ENCODE measurements at regions of chr14 and their contacts with region 1.

Region 1: GRCh38 chr14:96741151-96741977 is 55.8 kb upstream of the VRK1 start:
- DNase-seq: peak; percentile 52 to 85 (median 76)
- ATAC-seq: peak; percentile 95
- H3K4me3 ChIP-seq: peak overlapping the region; percentile 56
- H3K4me3 Mint-ChIP-seq: peak overlapping the region; percentile 61 to 86 (median 79)
- H3K27ac ChIP-seq: no peak overlapping the region
- H3K27ac Mint-ChIP-seq: peak overlapping the region in 1 of 9 donors; percentile 43
- H3K4me1 ChIP-seq: no peaks in the 10 kb centered on the region
- H3K4me1 Mint-ChIP-seq: peaks cover 2 to 24% (median 8%) of the 10 kb centered on the region in 7 donors
- H3K27me3 ChIP-seq: peaks cover 3 to 4% of the 10 kb centered on the region in 2 donors
- H3K27me3 Mint-ChIP-seq: peaks cover 54 to 72% (median 64%) of the 10 kb centered on the region in 5 donors

Region 2: DNA sequence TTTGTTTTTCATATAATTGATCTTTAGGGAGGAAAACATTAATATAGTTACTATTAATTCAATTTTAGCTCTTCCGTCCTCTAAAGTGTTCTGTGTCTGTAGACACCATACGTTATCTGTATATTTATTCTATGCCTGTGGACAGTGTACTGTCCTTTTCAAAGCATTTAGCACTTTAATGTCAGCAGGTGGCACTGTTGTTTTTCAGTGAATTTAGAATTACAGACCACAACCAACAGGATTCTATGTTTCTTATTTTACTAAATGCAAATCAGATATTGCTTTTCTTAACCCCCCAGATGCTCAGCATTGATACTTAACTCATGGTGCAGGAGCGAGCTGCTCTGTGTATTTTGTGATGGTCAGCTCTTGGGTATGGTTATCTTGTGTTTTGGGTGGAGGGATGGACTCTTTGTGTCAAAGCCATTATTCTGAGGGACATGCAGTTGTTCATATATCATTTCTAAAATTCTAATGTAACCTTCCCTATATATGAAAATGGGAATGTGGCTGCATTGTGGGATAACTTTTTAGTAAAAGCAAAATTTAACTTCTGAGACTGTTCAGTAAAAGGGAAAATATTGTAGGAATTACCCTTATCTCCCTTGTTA is 174.0 kb before region 1 on chr14:
- CTCF ChIA-PET with region 1: interaction called, 4 read pairs
- POLR2A ChIA-PET with region 1: no interaction called
- intact Hi-C with region 1: loop called (anchors 1 kb)
- DNase-seq: peak in 5 of 9 donors; percentile 16 to 30 (median 25)
- ATAC-seq: peak; percentile 52
- H3K4me3 ChIP-seq: no peak overlapping the region
- H3K4me3 Mint-ChIP-seq: no peak overlapping the region
- H3K27ac ChIP-seq: no peak overlapping the region
- H3K27ac Mint-ChIP-seq: peak overlapping the region in 1 of 9 donors; percentile 29
- H3K4me1 ChIP-seq: no peaks in the 10 kb centered on the region
- H3K4me1 Mint-ChIP-seq: peaks cover 0 to 10% (median 5%) of the 10 kb centered on the region in 7 donors
- H3K27me3 ChIP-seq: no peaks in the 10 kb centered on the region
- H3K27me3 Mint-ChIP-seq: no peaks in the 10 kb centered on the region

Region 3: GRCh38 chr14:96584199-96584906 is 157.0 kb before region 1 on chr14:
- CTCF ChIA-PET with region 1: no interaction called
- POLR2A ChIA-PET with region 1: no interaction called
- intact Hi-C with region 1: loop called in 1 of 2 experiments (anchors 5 kb)
- DNase-seq: peak in 4 of 9 donors; percentile 6 to 24 (median 14)
- ATAC-seq: peak; percentile 54
- H3K4me3 ChIP-seq: no peak overlapping the region
- H3K4me3 Mint-ChIP-seq: no peak overlapping the region
- H3K27ac ChIP-seq: no peak overlapping the region
- H3K27ac Mint-ChIP-seq: no peak overlapping the region
- H3K4me1 ChIP-seq: no peaks in the 10 kb centered on the region
- H3K4me1 Mint-ChIP-seq: peaks cover 0 to 6% (median 0%) of the 10 kb centered on the region in 7 donors
- H3K27me3 ChIP-seq: peaks cover 0 to 6% of the 10 kb centered on the region in 2 donors
- H3K27me3 Mint-ChIP-seq: peaks cover 8 to 33% (median 27%) of the 10 kb centered on the region in 5 donors

Region 4: GRCh38 chr14:97120611-97121031 is 379.3 kb after region 1 on chr14:
- CTCF ChIA-PET with region 1: no interaction called
- POLR2A ChIA-PET with region 1: no interaction called
- intact Hi-C with region 1: loop called in 1 of 2 experiments (anchors 2 kb)
- DNase-seq: peak; percentile 10 to 69 (median 48)
- ATAC-seq: peak; percentile 85
- H3K4me3 ChIP-seq: no peak overlapping the region
- H3K4me3 Mint-ChIP-seq: peak overlapping the region; percentile 56 to 81 (median 70)
- H3K27ac ChIP-seq: peak overlapping the region; percentile 57
- H3K27ac Mint-ChIP-seq: peak overlapping the region; percentile 75 to 96 (median 92)
- H3K4me1 ChIP-seq: peaks cover 22 to 33% of the 10 kb centered on the region in 2 donors
- H3K4me1 Mint-ChIP-seq: peaks cover 26 to 58% (median 37%) of the 10 kb centered on the region in 7 donors
- H3K27me3 ChIP-seq: no peaks in the 10 kb centered on the region
- H3K27me3 Mint-ChIP-seq: no peaks in the 10 kb centered on the region

Measured in naive thymus-derived CD4-positive, alpha-beta T cell (primary cell).